Caco-2 (cell line): ENCODE measurements at regions of chr6 and their contacts with region 1.

Region 1: GRCh38 chr6:85923013-85923430 is 280.3 kb upstream of the SYNCRIP start:
- DNase-seq: peak in 1 of 2 experiments; percentile 52
- H3K4me3 ChIP-seq: no peak overlapping the region
- H3K4me3 Mint-ChIP-seq: no peak overlapping the region
- H3K27ac Mint-ChIP-seq: no peak overlapping the region
- H3K4me1 ChIP-seq: no peaks in the 10 kb centered on the region
- H3K4me1 Mint-ChIP-seq: no peaks in the 10 kb centered on the region
- H3K27me3 ChIP-seq: no peaks in the 10 kb centered on the region; the same call in 1 of the 2 replicates
- H3K27me3 Mint-ChIP-seq: no peaks in the 10 kb centered on the region
- CTCF ChIP-seq: peak in 1 of 2 experiments; percentile 66

Region 2: GRCh38 chr6:85756982-85757381 is 166.0 kb before region 1 on chr6:
- CTCF ChIA-PET with region 1: no interaction called
- POLR2A ChIA-PET with region 1: no interaction called
- intact Hi-C with region 1: loop called (anchors 5 kb)
- DNase-seq: no peak
- H3K4me3 ChIP-seq: no peak overlapping the region
- H3K4me3 Mint-ChIP-seq: no peak overlapping the region
- H3K27ac Mint-ChIP-seq: no peak overlapping the region
- H3K4me1 ChIP-seq: no peaks in the 10 kb centered on the region
- H3K4me1 Mint-ChIP-seq: peaks cover 6% of the 10 kb centered on the region
- H3K27me3 ChIP-seq: no peaks in the 10 kb centered on the region
- H3K27me3 Mint-ChIP-seq: peaks cover 4% of the 10 kb centered on the region
- CTCF ChIP-seq: no peak

Region 3: GRCh38 chr6:86192123-86192522 is 269.1 kb after region 1 on chr6:
- CTCF ChIA-PET with region 1: no interaction called
- POLR2A ChIA-PET with region 1: no interaction called
- intact Hi-C with region 1: loop called (anchors 1 kb)
- DNase-seq: peak in 1 of 2 experiments; percentile 26
- H3K4me3 ChIP-seq: no peak overlapping the region
- H3K4me3 Mint-ChIP-seq: no peak overlapping the region
- H3K27ac Mint-ChIP-seq: no peak overlapping the region
- H3K4me1 ChIP-seq: no peaks in the 10 kb centered on the region
- H3K4me1 Mint-ChIP-seq: peaks cover 6% of the 10 kb centered on the region
- H3K27me3 ChIP-seq: no peaks in the 10 kb centered on the region
- H3K27me3 Mint-ChIP-seq: no peaks in the 10 kb centered on the region
- CTCF ChIP-seq: peak in 1 of 2 experiments; percentile 47

Region 4: GRCh38 chr6:86937219-86938079 is 1014.4 kb after region 1 on chr6 and contains the start of gene HTR1E:
- CTCF ChIA-PET with region 1: interaction called, 4 read pairs
- POLR2A ChIA-PET with region 1: no interaction called
- intact Hi-C with region 1: loop called (anchors 1 kb)
- DNase-seq: peak in 1 of 2 experiments; percentile 59
- H3K4me3 ChIP-seq: no peak within 1 kb of the TSS
- H3K4me3 Mint-ChIP-seq: peak within 1 kb of the TSS; percentile 46
- H3K27ac Mint-ChIP-seq: no peak within 1 kb of the TSS
- H3K4me1 ChIP-seq: no peaks in the 10 kb centered on the region
- H3K4me1 Mint-ChIP-seq: no peaks in the 10 kb centered on the region
- H3K27me3 ChIP-seq: no peaks in the 10 kb centered on the region; the same call in 1 of the 2 replicates
- H3K27me3 Mint-ChIP-seq: peaks cover 19% of the 10 kb centered on the region
- CTCF ChIP-seq: peak; percentile 50 to 66
- total RNA-seq, gene HTR1E: not detected in 2 replicates

Region 5: DNA sequence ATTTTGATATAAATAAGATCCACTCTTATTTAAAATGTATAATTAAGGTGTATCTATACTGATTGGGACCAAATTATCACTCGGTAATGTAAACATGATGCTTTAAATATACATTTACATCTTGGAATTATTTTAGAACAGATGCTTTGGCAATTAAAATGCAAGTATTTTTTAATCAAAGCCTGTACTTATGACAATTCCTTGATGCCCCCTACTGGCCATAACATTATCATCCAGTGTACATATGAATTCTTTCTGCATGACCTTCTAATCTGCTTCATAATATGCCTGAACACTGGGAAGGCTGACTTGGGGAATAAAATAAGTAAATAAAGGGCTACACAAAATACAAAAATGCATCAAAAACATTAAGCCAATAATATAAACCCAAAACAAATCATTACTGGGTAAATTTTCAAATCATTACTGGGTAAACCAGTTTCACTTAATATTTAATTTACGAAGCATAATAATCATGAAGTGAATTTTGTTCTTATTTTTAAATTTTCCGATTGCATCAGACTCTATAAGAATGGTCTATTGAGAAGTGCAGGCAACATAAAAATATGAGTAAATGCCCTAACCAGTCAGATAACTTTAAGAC is 1106.8 kb after region 1 on chr6:
- CTCF ChIA-PET with region 1: no interaction called
- POLR2A ChIA-PET with region 1: no interaction called
- intact Hi-C with region 1: loop called (anchors 1 kb)
- DNase-seq: peak in 1 of 2 experiments; percentile 11
- H3K4me3 ChIP-seq: no peak overlapping the region
- H3K4me3 Mint-ChIP-seq: no peak overlapping the region
- H3K27ac Mint-ChIP-seq: no peak overlapping the region
- H3K4me1 ChIP-seq: no peaks in the 10 kb centered on the region
- H3K4me1 Mint-ChIP-seq: no peaks in the 10 kb centered on the region
- H3K27me3 ChIP-seq: no peaks in the 10 kb centered on the region
- H3K27me3 Mint-ChIP-seq: peaks cover 16% of the 10 kb centered on the region
- CTCF ChIP-seq: peak; percentile 54 to 59